PC-9 (cell line): ENCODE measurements at regions of chr3 and their contacts with region 1.

Region 1: DNA sequence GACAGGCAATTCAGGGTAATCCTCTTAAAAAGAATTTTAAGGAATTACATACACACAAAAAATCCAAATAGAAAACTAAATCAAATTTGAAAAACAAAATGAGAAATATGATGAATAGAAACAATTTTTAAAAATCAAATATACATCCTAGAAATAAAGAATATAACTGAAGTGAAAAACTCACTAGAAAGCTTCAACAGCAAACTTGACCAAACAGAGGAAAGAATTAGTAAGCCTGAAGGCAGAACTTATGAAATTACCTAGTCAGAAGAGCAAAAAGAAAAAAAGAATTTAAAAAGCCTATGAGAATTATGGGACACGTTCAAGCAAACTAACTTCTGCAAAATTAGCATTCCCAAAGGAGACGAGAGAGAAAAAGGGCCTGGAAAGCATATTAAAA is 206.1 kb downstream of the PCCB start:
- DNase-seq: no peak
- H3K4me3 ChIP-seq: no peak overlapping the region
- H3K27ac ChIP-seq: no peak overlapping the region
- H3K4me1 ChIP-seq: no peaks in the 10 kb centered on the region
- H3K27me3 ChIP-seq: no peaks in the 10 kb centered on the region
- CTCF ChIP-seq: no peak

Region 2: DNA sequence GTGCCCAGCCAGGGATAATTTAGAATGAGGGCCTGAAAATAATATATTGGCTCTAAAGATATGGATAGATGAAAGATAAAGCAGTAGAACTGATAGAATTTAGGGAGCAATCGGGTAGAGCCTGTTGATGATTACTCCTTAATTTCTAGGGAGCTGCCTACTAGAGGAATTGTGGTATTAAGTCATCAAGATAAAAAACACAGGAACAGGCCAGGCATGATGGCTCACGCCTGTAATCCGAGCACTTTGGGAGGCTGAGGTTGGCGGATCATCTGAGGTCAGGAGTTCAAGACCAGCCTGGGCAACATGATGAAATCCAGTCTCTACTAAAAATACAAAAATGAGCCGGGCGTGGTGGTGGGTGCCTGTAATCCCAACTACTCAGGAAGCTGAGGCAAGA is 75.7 kb before region 1 on chr3:
- CTCF ChIA-PET with region 1: no interaction called
- POLR2A ChIA-PET with region 1: interaction called, 16 read pairs
- intact Hi-C with region 1: no loop called
- DNase-seq: no peak
- H3K4me3 ChIP-seq: no peak overlapping the region
- H3K27ac ChIP-seq: no peak overlapping the region
- H3K4me1 ChIP-seq: no peaks in the 10 kb centered on the region
- H3K27me3 ChIP-seq: no peaks in the 10 kb centered on the region
- CTCF ChIP-seq: no peak

Region 3: DNA sequence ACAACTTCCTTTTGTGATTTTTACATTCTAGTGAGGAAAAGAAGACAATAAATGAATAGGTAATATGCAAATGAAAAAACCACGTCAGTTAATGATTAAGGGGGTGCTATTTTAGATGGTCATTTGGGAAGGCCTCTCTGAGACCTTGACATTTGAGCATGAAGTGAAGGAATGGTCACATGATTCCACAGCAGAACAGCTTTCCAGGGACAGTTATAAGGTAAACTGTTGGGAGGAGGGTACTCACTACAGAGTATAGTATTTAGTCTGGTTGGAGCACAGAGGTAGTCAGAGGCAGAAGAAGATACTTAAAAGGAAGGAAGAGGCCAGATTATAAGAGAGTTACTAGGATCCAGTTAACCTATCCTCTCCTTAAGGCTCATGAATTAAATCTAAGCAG is 49.5 kb after region 1 on chr3:
- CTCF ChIA-PET with region 1: no interaction called
- POLR2A ChIA-PET with region 1: no interaction called
- intact Hi-C with region 1: no loop called
- DNase-seq: no peak
- H3K4me3 ChIP-seq: no peak overlapping the region
- H3K27ac ChIP-seq: no peak overlapping the region
- H3K4me1 ChIP-seq: no peaks in the 10 kb centered on the region
- H3K27me3 ChIP-seq: no peaks in the 10 kb centered on the region
- CTCF ChIP-seq: no peak